Uterus (tissue), 4 donors: ENCODE measurements at regions of chr9 and their contacts with region 1.

Region 1: DNA sequence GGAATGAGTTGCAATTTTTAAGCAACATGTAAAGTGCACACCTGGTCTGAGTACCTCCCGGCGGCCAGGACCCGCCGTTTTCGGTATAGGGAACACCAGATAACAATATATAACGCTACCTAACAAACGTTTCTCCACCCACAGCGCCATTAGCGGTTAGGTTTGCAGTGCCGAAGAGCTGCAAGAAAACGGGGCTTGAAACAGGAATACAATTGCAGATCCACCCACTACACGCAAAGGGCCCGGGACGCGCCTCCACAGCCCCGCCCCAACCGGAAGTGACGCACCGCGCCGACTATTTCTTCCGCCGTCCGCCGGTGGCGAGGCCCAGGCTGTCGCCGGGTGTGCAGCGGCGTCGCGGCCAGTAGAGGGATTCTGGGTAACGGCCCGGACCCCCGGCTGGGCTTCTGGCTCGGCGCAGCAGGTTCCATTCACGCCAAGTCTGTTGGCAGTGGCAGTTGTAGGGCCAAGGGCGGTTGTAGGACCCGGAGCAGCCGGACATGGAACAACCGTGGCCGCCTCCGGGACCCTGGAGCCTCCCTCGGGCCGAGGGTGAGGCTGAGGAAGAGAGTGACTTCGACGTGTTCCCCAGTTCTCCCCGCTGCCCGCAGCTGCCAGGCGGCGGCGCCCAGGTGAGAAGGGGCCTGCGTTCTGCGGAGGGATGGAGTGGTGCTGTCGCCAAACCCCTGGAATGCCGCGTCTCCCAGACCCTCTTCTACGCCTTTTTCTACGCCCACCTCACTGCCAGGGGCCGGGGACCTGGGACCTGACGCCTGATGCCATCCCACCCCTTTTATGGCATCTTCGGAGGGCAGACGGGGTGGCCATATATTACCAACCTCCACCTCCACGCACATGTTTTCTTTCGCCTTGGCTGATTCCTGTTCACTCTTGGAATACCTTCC is at the start of gene CDC37L1:
- DNase-seq: peak; percentile 98 to 99
- H3K4me3 ChIP-seq: peak within 1 kb of the TSS; percentile 74 to 82
- H3K27ac ChIP-seq: peak within 1 kb of the TSS; percentile 94 to 95
- H3K4me1 ChIP-seq: no peaks in the 10 kb centered on the region
- H3K27me3 ChIP-seq: no peaks in the 10 kb centered on the region
- CTCF ChIP-seq: peak; percentile 23 to 83 (median 71)
- POLR2A ChIP-seq: peak; percentile 98 to 99
- total RNA-seq, gene CDC37L1: 21.1 to 50.5 (median 34.0) TPM

Region 2: DNA sequence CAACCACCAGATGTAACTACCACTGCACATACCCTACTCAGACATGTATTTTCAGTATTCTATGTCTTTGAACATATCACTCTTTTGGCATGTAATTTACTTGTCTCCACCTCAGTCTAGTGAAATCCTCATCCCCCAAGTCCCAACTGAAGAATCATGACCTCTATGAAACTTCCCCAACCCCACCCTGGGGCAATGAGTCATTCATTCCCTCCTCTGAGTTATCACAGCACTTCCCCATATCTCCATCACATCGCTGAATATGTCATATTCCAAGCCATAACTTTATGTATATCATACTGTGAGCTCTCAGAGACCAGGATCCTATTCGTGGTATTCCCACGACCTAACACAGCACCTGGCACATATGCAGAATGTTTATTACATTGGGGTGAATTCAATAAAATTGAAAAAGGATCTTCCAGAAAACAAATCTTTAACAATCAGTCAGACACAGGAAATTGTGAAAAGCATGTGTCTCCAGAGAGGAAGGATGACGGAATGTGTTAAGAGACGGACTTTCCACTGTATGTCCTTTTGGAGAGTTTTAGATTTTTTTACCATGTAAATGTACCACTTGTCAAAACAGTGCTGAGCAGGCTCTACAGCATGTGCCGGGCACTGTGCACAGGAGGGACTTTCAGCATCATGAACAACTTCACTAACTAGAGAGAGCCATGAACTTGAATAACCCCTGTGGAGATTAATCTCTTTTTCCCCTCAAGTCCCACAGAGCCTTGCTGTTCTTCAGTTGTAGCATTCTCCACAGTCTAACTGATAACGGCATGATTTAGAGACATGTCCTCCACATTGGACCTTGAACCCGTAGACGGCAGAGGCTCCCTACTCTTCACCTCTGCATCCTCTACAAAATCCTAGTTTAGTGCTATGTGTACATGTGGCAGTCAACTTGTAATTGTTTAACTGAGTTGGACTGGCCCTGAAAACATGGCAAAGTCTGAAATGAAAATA is 593.1 kb before region 1 on chr9:
- intact Hi-C with region 1: no loop called
- DNase-seq: no peak
- H3K4me3 ChIP-seq: no peak overlapping the region
- H3K27ac ChIP-seq: no peak overlapping the region
- H3K4me1 ChIP-seq: no peaks in the 10 kb centered on the region
- H3K27me3 ChIP-seq: no peaks in the 10 kb centered on the region
- CTCF ChIP-seq: no peak
- POLR2A ChIP-seq: no peak

Region 3: GRCh38 chr9:4604678-4605095 is 74.8 kb before region 1 on chr9:
- intact Hi-C with region 1: no loop called
- DNase-seq: peak; percentile 24 to 59
- H3K4me3 ChIP-seq: no peak overlapping the region
- H3K27ac ChIP-seq: no peak overlapping the region
- H3K4me1 ChIP-seq: no peaks in the 10 kb centered on the region
- H3K27me3 ChIP-seq: no peaks in the 10 kb centered on the region
- CTCF ChIP-seq: peak; percentile 47 to 65 (median 54)
- POLR2A ChIP-seq: no peak

Region 4: GRCh38 chr9:4740638-4741364 is 61.3 kb after region 1 on chr9 and contains the start of gene AK3:
- intact Hi-C with region 1: loop called (anchors 10 kb)
- DNase-seq: peak; percentile 87 to 90
- H3K4me3 ChIP-seq: peak within 1 kb of the TSS; percentile 64 to 75
- H3K27ac ChIP-seq: peak within 1 kb of the TSS; percentile 92 to 96
- H3K4me1 ChIP-seq: peaks cover 0 to 12% of the 10 kb centered on the region in 2 donors
- H3K27me3 ChIP-seq: no peaks in the 10 kb centered on the region
- CTCF ChIP-seq: peak; percentile 16 to 52 (median 42)
- POLR2A ChIP-seq: peak; percentile 81 to 90
- total RNA-seq, gene AK3: 57.9 to 129 (median 78.4) TPM